ENCODE measurements at regions of chr11 and their contacts with region 1.

Region 1: DNA sequence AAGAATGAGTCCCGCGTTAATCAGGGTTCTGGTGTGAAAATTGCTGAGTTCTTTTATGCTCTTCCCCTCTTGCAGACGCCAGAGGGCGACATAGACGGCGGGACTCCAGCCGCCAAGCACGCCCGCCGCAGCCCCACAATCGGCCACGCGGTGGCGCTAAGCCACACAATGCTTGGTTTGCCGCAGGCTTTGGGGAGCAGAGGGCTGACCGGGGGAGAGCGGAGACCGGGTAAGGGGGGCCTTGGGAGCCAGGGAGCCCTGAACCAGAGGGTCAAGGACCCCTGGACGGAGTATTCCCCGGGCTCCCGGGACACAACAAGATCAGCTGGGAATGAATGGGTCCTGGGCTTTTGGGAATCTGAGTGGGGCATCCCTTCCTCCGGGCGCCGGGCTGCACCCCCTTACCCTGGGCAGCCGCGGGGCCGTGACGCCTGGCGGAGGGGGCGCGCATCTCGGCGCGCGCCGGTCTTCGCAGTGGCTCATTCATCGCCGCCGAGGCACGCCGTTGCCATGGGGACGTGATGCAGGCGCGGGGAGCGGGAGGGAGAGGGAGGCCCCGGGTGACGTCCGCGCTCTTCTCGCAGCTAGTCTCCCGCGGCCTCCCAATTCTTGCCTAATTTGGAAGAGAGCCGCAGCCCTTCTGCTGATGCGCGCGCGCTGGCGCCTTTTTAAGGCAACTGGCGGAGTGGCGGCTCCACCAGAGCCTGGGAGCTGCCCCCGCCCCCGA is 12.2 kb upstream of the NPAS4 start:
- DNase-seq: peak; percentile 84
- H3K4me3 ChIP-seq: peak overlapping the region; percentile 59
- H3K27ac ChIP-seq: no peak overlapping the region
- H3K27me3 ChIP-seq: peaks cover 4% of the 10 kb centered on the region
- CTCF ChIP-seq: peak; percentile 100

Region 2: DNA sequence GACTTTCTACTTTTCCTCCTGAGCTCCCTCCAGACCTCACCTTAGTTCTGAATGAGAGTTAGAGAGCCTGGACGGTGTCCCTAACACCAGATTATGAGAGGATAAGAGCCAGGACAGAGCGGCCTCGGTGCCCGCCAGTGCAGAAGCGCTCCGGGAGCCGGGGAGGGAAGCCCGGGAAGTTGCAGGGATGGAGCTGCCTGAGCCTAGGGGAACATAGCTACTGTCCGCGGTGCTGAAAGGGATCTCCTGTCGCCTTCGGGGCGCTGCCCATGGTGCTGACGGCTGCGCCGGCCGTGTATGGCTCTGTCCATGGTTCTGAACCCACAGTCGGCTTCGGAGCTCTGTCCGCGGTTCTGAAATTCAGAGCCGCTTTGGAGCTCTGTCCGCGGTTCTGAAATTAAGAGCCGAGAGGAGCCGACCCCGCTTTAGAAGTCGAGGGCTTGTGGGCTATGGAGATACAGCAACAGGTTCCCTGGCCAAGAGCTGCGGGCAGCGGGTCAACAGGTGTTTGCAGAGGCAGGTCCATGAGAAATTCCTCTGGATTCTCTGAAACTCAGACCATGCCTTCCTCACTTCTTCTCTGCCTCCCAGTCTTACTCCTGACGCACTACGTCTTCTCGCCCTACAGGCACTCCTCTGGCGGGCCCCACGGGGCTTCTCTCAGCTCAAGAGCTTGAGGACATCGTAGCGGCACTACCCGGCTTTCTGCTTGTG is 13.0 kb after region 1 on chr11:
- CTCF ChIA-PET with region 1: interaction called, 25 read pairs
- POLR2A ChIA-PET with region 1: interaction called, 12 read pairs
- DNase-seq: peak; percentile 77
- H3K4me3 ChIP-seq: no peak overlapping the region
- H3K27ac ChIP-seq: no peak overlapping the region
- H3K27me3 ChIP-seq: peaks cover 18% of the 10 kb centered on the region
- CTCF ChIP-seq: no peak

Region 3: GRCh38 chr11:66429983-66430602 is 21.4 kb after region 1 on chr11:
- CTCF ChIA-PET with region 1: interaction called, 26 read pairs
- POLR2A ChIA-PET with region 1: interaction called, 6 read pairs
- DNase-seq: peak; percentile 41
- H3K4me3 ChIP-seq: no peak overlapping the region
- H3K27ac ChIP-seq: no peak overlapping the region
- H3K27me3 ChIP-seq: no peaks in the 10 kb centered on the region
- CTCF ChIP-seq: peak; percentile 86

Region 4: GRCh38 chr11:66438504-66439466 is 30.1 kb after region 1 on chr11 and contains the start of gene MRPL11:
- CTCF ChIA-PET with region 1: interaction called, 18 read pairs
- POLR2A ChIA-PET with region 1: no interaction called
- DNase-seq: peak; percentile 80
- H3K4me3 ChIP-seq: peak within 1 kb of the TSS; percentile 81
- H3K27ac ChIP-seq: no peak within 1 kb of the TSS
- H3K27me3 ChIP-seq: no peaks in the 10 kb centered on the region
- CTCF ChIP-seq: peak; percentile 69
- polyA plus RNA-seq, gene MRPL11: 43.1 and 55.1 TPM in 2 replicates